CD8-positive, alpha-beta memory T cell (primary cell): ENCODE measurements at regions of chr12 and their contacts with region 1.

Region 1: GRCh38 chr12:54379401-54380201 is 4.9 kb downstream of the ZNF385A start:
- DNase-seq: peak; percentile 77 to 89 (median 85)
- H3K4me3 ChIP-seq: peak overlapping the region; percentile 29
- H3K4me3 Mint-ChIP-seq: peak overlapping the region; percentile 11 to 87 (median 71)
- H3K27ac ChIP-seq: no peak overlapping the region
- H3K27ac Mint-ChIP-seq: peak overlapping the region in 3 of 8 donors; percentile 15 to 91 (median 54)
- H3K4me1 ChIP-seq: peaks cover 4% of the 10 kb centered on the region
- H3K4me1 Mint-ChIP-seq: peaks cover 6 to 10% (median 7%) of the 10 kb centered on the region in 3 donors
- H3K27me3 ChIP-seq: no peaks in the 10 kb centered on the region
- H3K27me3 Mint-ChIP-seq: no peaks in the 10 kb centered on the region

Region 2: GRCh38 chr12:54251667-54252284 is 127.8 kb before region 1 on chr12:
- CTCF ChIA-PET with region 1: interaction called, 18 read pairs
- POLR2A ChIA-PET with region 1: no interaction called
- DNase-seq: peak in 2 of 5 donors; percentile 32 to 45
- H3K4me3 ChIP-seq: no peak overlapping the region
- H3K4me3 Mint-ChIP-seq: no peak overlapping the region
- H3K27ac ChIP-seq: no peak overlapping the region
- H3K27ac Mint-ChIP-seq: peak overlapping the region in 1 of 8 donors; percentile 26
- H3K4me1 ChIP-seq: no peaks in the 10 kb centered on the region
- H3K4me1 Mint-ChIP-seq: peaks cover 3 to 9% (median 7%) of the 10 kb centered on the region in 3 donors
- H3K27me3 ChIP-seq: no peaks in the 10 kb centered on the region
- H3K27me3 Mint-ChIP-seq: no peaks in the 10 kb centered on the region

Region 3: GRCh38 chr12:54294152-54294952 is 85.2 kb before region 1 on chr12:
- CTCF ChIA-PET with region 1: interaction called, 16 read pairs
- POLR2A ChIA-PET with region 1: interaction called, 5 read pairs
- DNase-seq: peak; percentile 32 to 68 (median 40)
- H3K4me3 ChIP-seq: no peak overlapping the region
- H3K4me3 Mint-ChIP-seq: no peak overlapping the region
- H3K27ac ChIP-seq: peak overlapping the region; percentile 80
- H3K27ac Mint-ChIP-seq: peak overlapping the region in 2 of 8 donors; percentile 47 to 74
- H3K4me1 ChIP-seq: peaks cover 3% of the 10 kb centered on the region
- H3K4me1 Mint-ChIP-seq: peaks cover 4 to 6% (median 6%) of the 10 kb centered on the region in 3 donors
- H3K27me3 ChIP-seq: no peaks in the 10 kb centered on the region
- H3K27me3 Mint-ChIP-seq: peaks cover 2 to 12% of the 10 kb centered on the region in 2 donors

Region 4: GRCh38 chr12:54359033-54359761 is 20.4 kb before region 1 on chr12:
- CTCF ChIA-PET with region 1: interaction called, 14 read pairs
- POLR2A ChIA-PET with region 1: no interaction called
- DNase-seq: peak; percentile 89 to 97 (median 94)
- H3K4me3 ChIP-seq: peak overlapping the region; percentile 80
- H3K4me3 Mint-ChIP-seq: no peak overlapping the region
- H3K27ac ChIP-seq: peak overlapping the region; percentile 71
- H3K27ac Mint-ChIP-seq: no peak overlapping the region
- H3K4me1 ChIP-seq: peaks cover 23% of the 10 kb centered on the region
- H3K4me1 Mint-ChIP-seq: peaks cover 8 to 13% (median 11%) of the 10 kb centered on the region in 3 donors
- H3K27me3 ChIP-seq: no peaks in the 10 kb centered on the region
- H3K27me3 Mint-ChIP-seq: peaks cover 0 to 2% of the 10 kb centered on the region in 2 donors

Region 5: DNA sequence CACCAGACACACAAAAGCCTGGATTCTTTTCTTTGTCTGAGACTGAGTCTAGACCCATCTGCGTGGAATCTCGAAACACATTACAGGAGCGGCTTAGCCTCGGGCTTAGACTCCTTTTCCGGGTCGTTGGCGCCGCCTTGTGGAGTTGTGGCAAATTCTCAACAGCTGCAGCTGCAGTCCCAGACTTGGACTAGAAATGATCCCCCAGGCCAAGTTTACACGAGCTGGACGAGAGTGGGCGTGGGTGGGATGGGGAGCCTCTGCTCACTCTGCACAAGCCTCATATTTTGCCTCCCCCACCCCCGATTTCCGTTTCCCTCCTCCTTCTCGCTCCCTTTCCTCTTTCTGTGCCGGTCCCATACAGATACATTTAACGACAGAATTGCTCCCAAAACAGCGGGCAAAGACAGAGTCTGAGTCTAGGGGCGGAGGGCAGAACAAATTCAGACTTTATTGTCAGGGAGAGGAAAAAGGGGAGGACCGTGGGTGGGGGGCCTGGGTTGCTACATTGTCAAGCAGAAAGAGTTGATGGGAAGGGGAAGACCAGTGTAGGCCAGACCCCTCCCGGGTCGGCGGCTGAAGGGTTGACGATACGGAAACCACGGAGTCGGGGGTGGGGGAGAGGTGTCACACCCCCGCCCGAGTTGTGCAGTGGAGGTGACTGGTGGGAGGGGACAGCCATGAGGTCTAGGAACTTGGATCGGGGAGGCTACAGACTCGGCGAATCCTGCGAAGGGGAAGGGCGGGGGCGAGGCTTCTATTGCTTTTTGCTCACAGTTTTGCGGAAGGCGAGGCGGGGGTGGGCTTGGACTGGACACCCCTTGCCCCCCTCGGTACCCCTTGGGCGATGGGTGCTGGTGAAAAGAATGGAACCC is 10.7 kb before region 1 on chr12:
- CTCF ChIA-PET with region 1: interaction called, 14 read pairs
- POLR2A ChIA-PET with region 1: interaction called, 4 read pairs
- DNase-seq: peak; percentile 75 to 91 (median 80)
- H3K4me3 ChIP-seq: peak overlapping the region; percentile 56
- H3K4me3 Mint-ChIP-seq: peak overlapping the region; percentile 34 to 77 (median 62)
- H3K27ac ChIP-seq: no peak overlapping the region
- H3K27ac Mint-ChIP-seq: peak overlapping the region in 7 of 8 donors; percentile 10 to 86 (median 62)
- H3K4me1 ChIP-seq: peaks cover 21% of the 10 kb centered on the region
- H3K4me1 Mint-ChIP-seq: peaks cover 22 to 34% (median 28%) of the 10 kb centered on the region in 3 donors
- H3K27me3 ChIP-seq: no peaks in the 10 kb centered on the region
- H3K27me3 Mint-ChIP-seq: peaks cover 0 to 2% of the 10 kb centered on the region in 2 donors

Region 6: DNA sequence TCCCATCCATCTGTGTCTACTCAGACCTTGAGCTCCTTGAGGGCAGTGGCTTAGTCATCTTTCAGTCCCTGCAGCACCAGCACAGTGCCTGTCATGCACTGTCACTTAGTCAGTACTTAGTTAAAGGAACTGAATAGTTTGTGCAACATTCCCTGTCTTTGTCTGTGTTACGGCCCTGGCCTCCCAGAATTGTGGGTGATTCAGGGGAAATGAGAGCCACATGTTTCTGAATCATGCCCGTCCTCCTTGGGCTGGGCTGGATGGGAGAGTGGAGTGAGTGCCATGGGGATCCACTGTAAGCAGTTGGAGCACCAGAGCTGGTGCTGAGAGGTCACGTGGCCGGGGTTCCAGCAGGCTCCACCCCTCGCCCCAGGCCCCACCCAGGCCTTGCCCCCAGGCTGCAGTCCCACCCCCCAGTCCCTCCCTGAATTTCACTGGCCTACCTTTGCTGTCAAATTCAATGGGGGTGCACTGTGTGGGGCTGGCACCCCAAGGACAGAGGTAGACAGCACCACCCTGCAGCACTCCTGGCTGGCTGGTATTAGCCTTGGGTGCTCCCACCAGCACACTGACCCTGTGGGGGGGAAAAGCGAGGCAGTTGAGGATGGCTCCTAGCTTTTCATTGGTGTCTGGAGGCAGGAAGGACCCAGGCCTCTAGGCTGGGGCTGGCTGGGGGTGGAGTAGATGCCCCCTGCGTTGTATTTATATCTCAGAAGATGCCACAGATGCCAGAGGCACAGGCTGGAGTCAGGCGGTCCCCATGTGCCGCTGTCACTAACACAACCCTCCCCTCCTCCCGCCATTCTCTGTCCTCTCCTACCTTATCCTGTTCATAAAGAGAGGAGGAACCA is 32.0 kb after region 1 on chr12:
- CTCF ChIA-PET with region 1: interaction called, 20 read pairs
- POLR2A ChIA-PET with region 1: no interaction called
- DNase-seq: peak in 4 of 5 donors; percentile 37 to 62 (median 50)
- H3K4me3 ChIP-seq: peak overlapping the region; percentile 85
- H3K4me3 Mint-ChIP-seq: peak overlapping the region; percentile 32 to 88 (median 71)
- H3K27ac ChIP-seq: peak overlapping the region; percentile 81
- H3K27ac Mint-ChIP-seq: peak overlapping the region; percentile 91 to 100 (median 96)
- H3K4me1 ChIP-seq: peaks cover 65% of the 10 kb centered on the region
- H3K4me1 Mint-ChIP-seq: peaks cover 63 to 78% (median 66%) of the 10 kb centered on the region in 3 donors
- H3K27me3 ChIP-seq: no peaks in the 10 kb centered on the region
- H3K27me3 Mint-ChIP-seq: no peaks in the 10 kb centered on the region

Region 7: GRCh38 chr12:54526812-54527630 is 147.4 kb after region 1 on chr12:
- CTCF ChIA-PET with region 1: no interaction called
- POLR2A ChIA-PET with region 1: no interaction called
- DNase-seq: peak in 1 of 5 donors; percentile 19
- H3K4me3 ChIP-seq: no peak overlapping the region
- H3K4me3 Mint-ChIP-seq: peak overlapping the region in 1 of 7 donors; percentile 68
- H3K27ac ChIP-seq: no peak overlapping the region
- H3K27ac Mint-ChIP-seq: peak overlapping the region in 2 of 8 donors; percentile 30 to 52
- H3K4me1 ChIP-seq: no peaks in the 10 kb centered on the region
- H3K4me1 Mint-ChIP-seq: peaks cover 0 to 2% (median 0%) of the 10 kb centered on the region in 3 donors
- H3K27me3 ChIP-seq: no peaks in the 10 kb centered on the region
- H3K27me3 Mint-ChIP-seq: no peaks in the 10 kb centered on the region